Endothelial cell of umbilical vein (primary cell): ENCODE measurements at regions of chr5 and their contacts with region 1.

Region 1: GRCh38 chr5:142826741-142827732 is 56.9 kb downstream of the ARHGAP26 start:
- DNase-seq: peak; percentile 91
- H3K4me3 ChIP-seq: peak overlapping the region in 1 of 3 experiments; percentile 20
- H3K27ac ChIP-seq: peak overlapping the region; percentile 83
- H3K4me1 ChIP-seq: peaks cover 72% of the 10 kb centered on the region
- H3K27me3 ChIP-seq: no peaks in the 10 kb centered on the region
- CTCF ChIP-seq: no peak
- POLR2A ChIP-seq: no peak

Region 2: DNA sequence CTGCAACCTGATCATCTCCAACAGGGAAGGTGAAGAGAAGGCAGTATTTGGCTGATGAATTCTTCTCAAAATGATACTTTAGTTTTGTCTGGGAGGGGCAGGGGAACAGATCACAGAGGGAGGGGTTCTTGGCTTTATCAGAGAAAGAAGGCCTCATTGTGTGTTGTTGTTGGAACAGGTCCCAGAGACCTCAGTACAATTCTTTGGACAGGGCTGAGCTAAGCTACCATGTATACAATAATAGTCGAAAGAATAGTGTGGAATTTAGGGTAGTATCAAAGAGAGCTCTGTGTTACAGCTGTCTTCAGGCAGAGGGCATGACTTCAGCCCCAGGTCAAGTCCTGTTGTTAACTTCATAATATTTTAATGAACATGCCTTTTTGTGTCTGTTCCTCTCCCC is 17.0 kb before region 1 on chr5:
- CTCF ChIA-PET with region 1: interaction called, 12 read pairs
- POLR2A ChIA-PET with region 1: no interaction called
- dilution Hi-C with region 1: no loop called
- intact Hi-C with region 1: loop called (anchors 2 kb)
- DNase-seq: peak; percentile 71
- H3K4me3 ChIP-seq: no peak overlapping the region
- H3K27ac ChIP-seq: no peak overlapping the region
- H3K4me1 ChIP-seq: peaks cover 27% of the 10 kb centered on the region
- H3K27me3 ChIP-seq: no peaks in the 10 kb centered on the region
- CTCF ChIP-seq: no peak
- POLR2A ChIP-seq: no peak

Region 3: GRCh38 chr5:142874537-142874936 is 47.5 kb after region 1 on chr5:
- CTCF ChIA-PET with region 1: interaction called, 4 read pairs
- POLR2A ChIA-PET with region 1: interaction called, 3 read pairs
- dilution Hi-C with region 1: no loop called
- intact Hi-C with region 1: loop called (anchors 1 kb)
- DNase-seq: peak; percentile 96
- H3K4me3 ChIP-seq: no peak overlapping the region
- H3K27ac ChIP-seq: peak overlapping the region; percentile 42
- H3K4me1 ChIP-seq: peaks cover 40% of the 10 kb centered on the region
- H3K27me3 ChIP-seq: no peaks in the 10 kb centered on the region
- CTCF ChIP-seq: no peak
- POLR2A ChIP-seq: no peak